ENCODE measurements at regions of chr5 and their contacts with region 1.

Region 1: GRCh38 chr5:32585446-32586275 is at the start of gene SUB1:
- DNase-seq: peak; percentile 87 to 96 (median 93)
- ATAC-seq: peak; percentile 90 to 94
- H3K4me3 Mint-ChIP-seq: peak within 1 kb of the TSS; percentile 94 to 100 (median 98)
- H3K27ac Mint-ChIP-seq: peak within 1 kb of the TSS; percentile 93 to 99 (median 99)
- H3K4me1 Mint-ChIP-seq: peaks cover 10 to 77% (median 45%) of the 10 kb centered on the region in 4 donors
- H3K27me3 Mint-ChIP-seq: peaks cover 0 to 2% (median 0%) of the 10 kb centered on the region in 5 donors
- polyA plus RNA-seq, gene SUB1: 391 to 592 (median 485) TPM

Region 2: GRCh38 chr5:32174011-32174870 is 411.4 kb before region 1 on chr5 and contains the start of gene GOLPH3:
- POLR2A ChIA-PET with region 1: interaction called, 10 read pairs
- DNase-seq: peak; percentile 85 to 95 (median 89)
- ATAC-seq: peak; percentile 89 to 92
- H3K4me3 Mint-ChIP-seq: peak within 1 kb of the TSS; percentile 93 to 99 (median 97)
- H3K27ac Mint-ChIP-seq: peak within 1 kb of the TSS; percentile 95 to 99 (median 97)
- H3K4me1 Mint-ChIP-seq: peaks cover 12 to 41% (median 33%) of the 10 kb centered on the region in 4 donors
- H3K27me3 Mint-ChIP-seq: peaks cover 0 to 7% (median 2%) of the 10 kb centered on the region in 5 donors
- polyA plus RNA-seq, gene GOLPH3: 64.0 to 88.0 (median 74.3) TPM

Region 3: DNA sequence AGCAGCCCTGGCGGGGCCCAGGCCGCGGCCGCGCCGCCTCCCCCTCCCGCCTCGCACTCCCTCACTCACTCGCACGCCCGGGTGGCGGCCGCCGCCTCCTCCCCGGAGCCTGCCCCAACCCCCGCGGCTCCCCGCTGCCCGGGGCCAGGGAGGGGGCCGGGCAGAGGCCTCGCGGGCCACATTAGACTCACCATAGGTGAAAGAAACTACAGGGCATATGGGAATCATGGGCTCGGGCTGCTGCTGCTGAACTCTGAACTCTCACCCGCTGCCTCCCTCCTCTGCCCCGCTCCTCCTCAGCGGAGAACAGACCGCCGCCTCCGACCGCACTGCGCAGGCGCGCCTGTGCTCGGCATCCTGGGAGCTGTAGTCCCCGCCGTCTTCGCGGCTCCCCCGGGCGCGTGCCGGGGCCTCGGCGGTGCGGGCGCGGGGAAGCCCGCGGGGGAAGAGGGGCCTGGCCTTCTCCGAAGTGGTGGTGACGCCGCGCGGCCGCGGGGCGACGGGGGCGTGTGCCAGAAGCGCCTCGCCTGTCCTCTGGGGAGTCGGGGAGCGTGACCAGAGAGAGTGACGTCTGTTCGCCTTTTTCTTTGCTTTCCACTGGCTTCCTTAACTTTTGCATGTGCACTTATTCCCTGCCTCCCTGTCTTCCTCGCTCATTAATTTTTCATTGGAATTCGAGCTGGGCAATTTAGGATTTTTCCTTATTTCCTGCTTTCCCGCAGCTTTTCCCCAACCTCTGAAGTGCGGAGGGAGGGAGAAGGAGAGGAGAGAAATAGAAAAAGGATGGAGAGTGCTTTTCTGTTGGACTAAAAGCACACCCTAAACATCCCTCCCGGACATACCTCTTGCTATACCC is 141.0 kb before region 1 on chr5 and contains the start of gene ZFR:
- POLR2A ChIA-PET with region 1: interaction called, 13 read pairs
- DNase-seq: peak; percentile 90 to 95 (median 92)
- ATAC-seq: peak; percentile 89 to 92
- H3K4me3 Mint-ChIP-seq: peak within 1 kb of the TSS; percentile 88 to 96 (median 94)
- H3K27ac Mint-ChIP-seq: peak within 1 kb of the TSS; percentile 84 to 97 (median 94)
- H3K4me1 Mint-ChIP-seq: peaks cover 9 to 58% (median 35%) of the 10 kb centered on the region in 4 donors
- H3K27me3 Mint-ChIP-seq: peaks cover 0 to 2% (median 0%) of the 10 kb centered on the region in 5 donors
- polyA plus RNA-seq, gene ZFR: 69.8 to 79.4 (median 72.0) TPM

Region 4: GRCh38 chr5:32639943-32640342 is 54.3 kb after region 1 on chr5:
- POLR2A ChIA-PET with region 1: no interaction called
- DNase-seq: no peak
- ATAC-seq: no peak
- H3K4me3 Mint-ChIP-seq: no peak overlapping the region
- H3K27ac Mint-ChIP-seq: no peak overlapping the region
- H3K4me1 Mint-ChIP-seq: peaks cover 0 to 2% (median 0%) of the 10 kb centered on the region in 4 donors
- H3K27me3 Mint-ChIP-seq: peaks cover 0 to 2% (median 0%) of the 10 kb centered on the region in 5 donors

Measured in naive thymus-derived CD8-positive, alpha-beta T cell (primary cell).